ENCODE measurements at regions of chr17 and their contacts with region 1.

Region 1: GRCh38 chr17:4004517-4005295 is 40.5 kb upstream of the ATP2A3 start:
- DNase-seq: peak; percentile 88
- H3K4me3 ChIP-seq: no peak overlapping the region
- H3K27ac ChIP-seq: no peak overlapping the region
- H3K4me1 ChIP-seq: peaks cover 0 to 2% of the 10 kb centered on the region in 2 experiments; a peak in 1 of 4 replicates
- H3K27me3 ChIP-seq: no peaks in the 10 kb centered on the region
- CTCF ChIP-seq: peak; percentile 68
- EP300 ChIP-seq: no peak
- RAD21 ChIP-seq: peak; percentile 67

Region 2: GRCh38 chr17:3972281-3972731 is 32.4 kb before region 1 on chr17:
- CTCF ChIA-PET with region 1: no interaction called
- POLR2A ChIA-PET with region 1: no interaction called
- DNase-seq: no peak
- H3K4me3 ChIP-seq: no peak overlapping the region
- H3K27ac ChIP-seq: no peak overlapping the region
- H3K4me1 ChIP-seq: peaks cover 0 to 2% of the 10 kb centered on the region in 2 experiments; a peak in 1 of 4 replicates
- H3K27me3 ChIP-seq: no peaks in the 10 kb centered on the region
- CTCF ChIP-seq: no peak
- EP300 ChIP-seq: no peak
- RAD21 ChIP-seq: no peak

Region 3: GRCh38 chr17:4017377-4017776 is 12.7 kb after region 1 on chr17:
- CTCF ChIA-PET with region 1: interaction called, 17 read pairs
- POLR2A ChIA-PET with region 1: no interaction called
- DNase-seq: no peak
- H3K4me3 ChIP-seq: no peak overlapping the region
- H3K27ac ChIP-seq: no peak overlapping the region
- H3K4me1 ChIP-seq: no peaks in the 10 kb centered on the region
- H3K27me3 ChIP-seq: no peaks in the 10 kb centered on the region
- CTCF ChIP-seq: peak; percentile 37
- EP300 ChIP-seq: no peak
- RAD21 ChIP-seq: no peak

Region 4: GRCh38 chr17:4035081-4035680 is 30.5 kb after region 1 on chr17:
- CTCF ChIA-PET with region 1: no interaction called
- POLR2A ChIA-PET with region 1: no interaction called
- DNase-seq: no peak
- H3K4me3 ChIP-seq: no peak overlapping the region
- H3K27ac ChIP-seq: no peak overlapping the region
- H3K4me1 ChIP-seq: no peaks in the 10 kb centered on the region
- H3K27me3 ChIP-seq: no peaks in the 10 kb centered on the region
- CTCF ChIP-seq: no peak; the same call in 1 of the 2 replicates
- EP300 ChIP-seq: no peak
- RAD21 ChIP-seq: no peak